ENCODE measurements at regions of chr2 and their contacts with region 1.

Region 1: GRCh38 chr2:53969968-53970723 is 647 bp downstream of the PSME4 start:
- DNase-seq: peak; percentile 40
- H3K4me3 Mint-ChIP-seq: peak overlapping the region; percentile 97
- H3K27ac Mint-ChIP-seq: peak overlapping the region; percentile 96
- H3K4me1 Mint-ChIP-seq: peaks cover 44% of the 10 kb centered on the region
- H3K27me3 Mint-ChIP-seq: no peaks in the 10 kb centered on the region
- CTCF ChIP-seq: no peak

Region 2: GRCh38 chr2:54073797-54074196 is 103.7 kb after region 1 on chr2:
- CTCF ChIA-PET with region 1: no interaction called
- intact Hi-C with region 1: loop called (anchors 10 kb)
- DNase-seq: peak; percentile 48
- H3K4me3 Mint-ChIP-seq: no peak overlapping the region
- H3K27ac Mint-ChIP-seq: peak overlapping the region; percentile 78
- H3K4me1 Mint-ChIP-seq: peaks cover 14% of the 10 kb centered on the region
- H3K27me3 Mint-ChIP-seq: no peaks in the 10 kb centered on the region
- CTCF ChIP-seq: no peak

Measured in Calu3 (cell line).